Activated CD8-positive, alpha-beta T cell treated with anti-CD3 and anti-CD28 coated beads for 36 hours (primary cell): ENCODE measurements at regions of chr19 and their contacts with region 1.

Region 1: GRCh38 chr19:34145741-34146202 is 26.5 kb upstream of the LSM14A start:
- DNase-seq: peak; percentile 72
- ATAC-seq: peak; percentile 74
- H3K4me3 Mint-ChIP-seq: no peak overlapping the region
- H3K27ac Mint-ChIP-seq: no peak overlapping the region
- H3K4me1 Mint-ChIP-seq: no peaks in the 10 kb centered on the region
- H3K27me3 Mint-ChIP-seq: no peaks in the 10 kb centered on the region
- CTCF ChIP-seq: peak; percentile 80

Region 2: GRCh38 chr19:34057155-34057554 is 88.6 kb before region 1 on chr19:
- CTCF ChIA-PET with region 1: no interaction called
- POLR2A ChIA-PET with region 1: no interaction called
- intact Hi-C with region 1: no loop called
- DNase-seq: no peak
- ATAC-seq: no peak
- H3K4me3 Mint-ChIP-seq: no peak overlapping the region
- H3K27ac Mint-ChIP-seq: no peak overlapping the region
- H3K4me1 Mint-ChIP-seq: no peaks in the 10 kb centered on the region
- H3K27me3 Mint-ChIP-seq: peaks cover 4% of the 10 kb centered on the region
- CTCF ChIP-seq: no peak

Region 3: DNA sequence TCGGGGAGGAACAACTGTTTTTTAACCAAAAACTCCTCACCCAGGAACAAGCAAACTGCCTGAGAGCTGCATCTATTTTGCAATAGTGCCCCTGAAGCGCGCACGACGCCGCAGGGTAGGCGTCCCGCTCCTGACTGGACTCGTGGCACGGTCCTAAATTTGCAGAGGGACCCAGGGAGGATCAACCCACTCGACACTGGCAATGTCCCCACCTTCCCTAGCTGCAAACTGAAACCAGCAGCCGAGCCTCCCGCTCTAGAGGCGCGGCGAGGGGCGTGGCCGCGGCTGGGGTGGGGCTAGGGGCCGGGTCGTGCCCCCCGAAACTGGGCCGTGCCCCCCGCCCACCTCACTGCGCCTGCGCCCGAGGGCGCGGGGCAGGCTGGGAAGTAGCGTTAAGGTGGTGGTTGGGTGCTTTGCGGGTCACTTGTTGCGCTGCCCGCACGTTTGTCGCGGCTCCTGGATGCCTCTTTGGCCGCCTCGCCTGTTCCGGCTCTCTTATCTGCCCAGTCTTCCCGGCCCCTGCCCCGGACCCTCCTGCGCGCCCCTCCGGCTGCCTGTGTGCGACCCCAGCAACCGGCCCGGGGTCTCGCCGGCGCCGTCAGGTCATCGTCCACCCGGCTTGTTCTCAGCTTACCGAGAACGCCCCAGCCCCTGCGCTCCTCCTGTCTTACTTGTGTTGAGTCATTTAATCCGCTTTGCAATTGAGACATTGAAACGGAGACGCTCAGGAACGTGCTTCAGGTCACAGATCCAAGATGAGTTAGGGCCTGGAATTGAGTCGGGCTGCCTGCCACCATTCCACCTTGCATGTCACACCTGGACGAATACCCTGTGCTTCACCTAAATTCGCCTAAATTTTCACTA is 11.3 kb before region 1 on chr19:
- CTCF ChIA-PET with region 1: interaction called, 10 read pairs
- POLR2A ChIA-PET with region 1: no interaction called
- intact Hi-C with region 1: no loop called
- DNase-seq: peak; percentile 93
- ATAC-seq: peak; percentile 98
- H3K4me3 Mint-ChIP-seq: peak overlapping the region; percentile 91
- H3K27ac Mint-ChIP-seq: peak overlapping the region; percentile 94
- H3K4me1 Mint-ChIP-seq: peaks cover 2% of the 10 kb centered on the region
- H3K27me3 Mint-ChIP-seq: no peaks in the 10 kb centered on the region
- CTCF ChIP-seq: no peak

Region 4: DNA sequence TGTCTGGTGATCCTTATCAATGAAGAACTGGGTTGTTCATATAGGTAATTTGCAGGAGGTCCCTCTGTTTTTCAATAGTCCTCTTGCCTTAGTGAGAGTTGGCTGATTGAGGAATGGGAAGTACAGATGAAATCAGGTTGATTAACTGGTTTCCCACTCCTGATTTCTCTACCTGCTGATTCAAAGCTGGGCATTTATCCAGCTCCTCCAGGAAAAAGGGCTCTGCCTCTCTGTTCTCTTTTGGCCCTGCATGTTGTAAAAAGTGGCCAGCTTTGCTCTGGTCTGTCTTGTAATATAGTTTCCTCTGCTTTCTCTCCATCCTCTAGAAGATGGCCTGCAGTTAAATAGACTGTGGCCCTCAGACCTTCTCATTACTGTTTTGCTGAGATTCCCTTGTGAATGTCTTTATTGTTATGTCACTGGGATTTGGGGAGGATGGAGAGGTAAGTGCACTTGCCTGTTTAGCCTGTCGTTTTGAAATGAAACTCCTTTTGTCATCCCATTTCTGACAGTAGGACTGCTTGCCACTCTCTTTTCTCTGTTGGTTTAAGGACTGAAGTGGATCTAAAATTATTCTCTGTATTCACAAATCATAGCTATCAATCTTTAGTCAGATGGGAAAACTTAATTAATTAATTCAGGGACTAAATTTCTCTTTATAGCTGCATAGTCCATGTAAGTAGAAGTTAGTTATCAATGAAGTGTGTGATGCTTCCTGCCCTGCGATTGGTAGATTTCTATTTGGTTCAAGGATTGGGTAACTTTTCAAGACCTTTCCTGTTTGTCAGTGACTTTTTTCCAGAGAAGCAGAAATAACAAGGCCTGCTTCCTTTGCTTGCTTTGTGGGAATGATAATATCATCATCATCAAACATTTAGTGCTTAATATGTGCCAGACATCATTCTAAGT is 137.1 kb after region 1 on chr19:
- CTCF ChIA-PET with region 1: no interaction called
- POLR2A ChIA-PET with region 1: no interaction called
- intact Hi-C with region 1: no loop called
- DNase-seq: no peak
- ATAC-seq: no peak
- H3K4me3 Mint-ChIP-seq: no peak overlapping the region
- H3K27ac Mint-ChIP-seq: no peak overlapping the region
- H3K4me1 Mint-ChIP-seq: peaks cover 21% of the 10 kb centered on the region
- H3K27me3 Mint-ChIP-seq: no peaks in the 10 kb centered on the region
- CTCF ChIP-seq: no peak